ENCODE measurements at regions of chr6 and their contacts with region 1.

Region 1: GRCh38 chr6:56955171-56956045 is 501 bp downstream of the BEND6 start:
- DNase-seq: peak; percentile 67 to 90
- ATAC-seq: peak; percentile 81 to 90
- H3K4me3 ChIP-seq: peak overlapping the region; percentile 89
- H3K27ac ChIP-seq: peak overlapping the region; percentile 95 to 97
- H3K4me1 ChIP-seq: peaks cover 46% of the 10 kb centered on the region
- CTCF ChIP-seq: peak; percentile 81
- EP300 ChIP-seq: no peak
- POLR2A ChIP-seq: peak; percentile 15; the same call in 1 of the 2 replicates
- RAD21 ChIP-seq: peak; percentile 63 to 73

Region 2: DNA sequence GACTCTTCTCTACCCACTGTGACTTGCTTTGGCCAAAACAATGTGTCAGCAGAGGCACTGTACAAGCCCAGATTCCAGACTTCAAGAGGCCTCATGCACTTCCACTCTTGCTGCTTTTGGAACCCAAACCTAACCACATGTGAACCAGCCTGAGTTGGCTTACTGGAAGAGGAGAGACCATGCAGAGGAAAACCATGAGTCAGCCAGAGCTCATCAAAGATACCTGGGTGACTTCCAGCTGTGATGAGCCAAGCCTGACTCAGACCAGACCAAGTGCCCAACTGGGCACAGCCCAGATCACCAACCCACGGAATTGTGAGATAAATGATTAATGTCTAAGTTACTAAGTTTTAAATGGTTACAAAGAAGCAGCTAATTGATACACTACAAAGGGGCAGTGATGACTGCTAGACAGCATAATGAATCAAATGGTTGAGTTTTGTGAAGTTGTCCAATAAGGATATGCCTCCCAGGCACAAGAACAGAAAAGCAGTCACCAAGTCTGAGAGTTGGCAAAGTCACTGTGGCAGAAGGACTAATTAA is 16.7 kb before region 1 on chr6:
- CTCF ChIA-PET with region 1: interaction called, 14 read pairs
- POLR2A ChIA-PET with region 1: interaction called, 8 read pairs
- DNase-seq: peak; percentile 72 to 88
- ATAC-seq: peak; percentile 100
- H3K4me3 ChIP-seq: no peak overlapping the region
- H3K27ac ChIP-seq: peak overlapping the region; percentile 60 to 85
- H3K4me1 ChIP-seq: peaks cover 17% of the 10 kb centered on the region
- CTCF ChIP-seq: no peak
- EP300 ChIP-seq: no peak
- POLR2A ChIP-seq: no peak
- RAD21 ChIP-seq: no peak

Region 3: GRCh38 chr6:57004292-57004691 is 48.9 kb after region 1 on chr6:
- CTCF ChIA-PET with region 1: no interaction called
- POLR2A ChIA-PET with region 1: no interaction called
- DNase-seq: no peak
- ATAC-seq: no peak
- H3K4me3 ChIP-seq: no peak overlapping the region
- H3K27ac ChIP-seq: no peak overlapping the region
- H3K4me1 ChIP-seq: no peaks in the 10 kb centered on the region
- CTCF ChIP-seq: no peak
- EP300 ChIP-seq: no peak
- POLR2A ChIP-seq: no peak
- RAD21 ChIP-seq: no peak

Region 4: GRCh38 chr6:57123111-57123510 is 167.7 kb after region 1 on chr6:
- CTCF ChIA-PET with region 1: no interaction called
- POLR2A ChIA-PET with region 1: no interaction called
- DNase-seq: no peak
- ATAC-seq: no peak
- H3K4me3 ChIP-seq: no peak overlapping the region
- H3K27ac ChIP-seq: no peak overlapping the region
- H3K4me1 ChIP-seq: peaks cover 8% of the 10 kb centered on the region; the same call in 1 of the 3 replicates
- CTCF ChIP-seq: no peak
- EP300 ChIP-seq: no peak
- POLR2A ChIP-seq: no peak
- RAD21 ChIP-seq: no peak